ENCODE measurements at regions of chr13 and their contacts with region 1.

Region 1: DNA sequence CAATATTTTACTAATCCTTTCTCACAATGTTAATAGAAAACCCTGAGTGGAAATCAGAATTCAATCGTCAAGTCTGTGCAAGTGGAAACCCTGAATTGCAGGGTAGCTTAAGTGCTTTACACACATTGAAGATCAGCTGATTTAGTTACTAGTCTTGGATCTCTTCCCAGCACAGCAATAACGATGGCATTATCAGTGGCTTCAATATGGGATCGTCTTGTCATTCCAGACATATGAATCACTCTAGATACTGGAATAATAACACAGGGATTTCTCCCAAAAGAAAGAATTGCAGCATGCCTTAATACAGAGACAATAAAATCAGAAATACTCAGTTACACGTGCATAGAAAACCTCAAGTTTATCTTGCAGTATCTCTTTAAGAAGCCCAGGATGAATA is 12.6 kb upstream of the METTL21C start:
- DNase-seq: peak; percentile 84
- ATAC-seq: peak; percentile 76
- H3K4me3 ChIP-seq: no peak overlapping the region
- H3K27ac ChIP-seq: no peak overlapping the region
- H3K4me1 ChIP-seq: peaks cover 44% of the 10 kb centered on the region
- H3K27me3 ChIP-seq: no peaks in the 10 kb centered on the region
- CTCF ChIP-seq: no peak

Region 2: GRCh38 chr13:102651892-102652291 is 55.6 kb before region 1 on chr13:
- CTCF ChIA-PET with region 1: no interaction called
- POLR2A ChIA-PET with region 1: no interaction called
- intact Hi-C with region 1: loop called (anchors 5 kb)
- DNase-seq: no peak
- ATAC-seq: no peak
- H3K4me3 ChIP-seq: no peak overlapping the region
- H3K27ac ChIP-seq: no peak overlapping the region
- H3K4me1 ChIP-seq: peaks cover 8% of the 10 kb centered on the region; the same call in 1 of the 2 replicates
- H3K27me3 ChIP-seq: no peaks in the 10 kb centered on the region
- CTCF ChIP-seq: no peak

Region 3: GRCh38 chr13:103308667-103309066 is 601.2 kb after region 1 on chr13:
- CTCF ChIA-PET with region 1: no interaction called
- POLR2A ChIA-PET with region 1: no interaction called
- intact Hi-C with region 1: no loop called
- DNase-seq: no peak
- ATAC-seq: no peak
- H3K4me3 ChIP-seq: no peak overlapping the region
- H3K27ac ChIP-seq: no peak overlapping the region
- H3K4me1 ChIP-seq: no peaks in the 10 kb centered on the region
- H3K27me3 ChIP-seq: no peaks in the 10 kb centered on the region
- CTCF ChIP-seq: no peak

Measured in PC-3 (cell line).